ENCODE measurements at regions of chr9 and their contacts with region 1.

Region 1: DNA sequence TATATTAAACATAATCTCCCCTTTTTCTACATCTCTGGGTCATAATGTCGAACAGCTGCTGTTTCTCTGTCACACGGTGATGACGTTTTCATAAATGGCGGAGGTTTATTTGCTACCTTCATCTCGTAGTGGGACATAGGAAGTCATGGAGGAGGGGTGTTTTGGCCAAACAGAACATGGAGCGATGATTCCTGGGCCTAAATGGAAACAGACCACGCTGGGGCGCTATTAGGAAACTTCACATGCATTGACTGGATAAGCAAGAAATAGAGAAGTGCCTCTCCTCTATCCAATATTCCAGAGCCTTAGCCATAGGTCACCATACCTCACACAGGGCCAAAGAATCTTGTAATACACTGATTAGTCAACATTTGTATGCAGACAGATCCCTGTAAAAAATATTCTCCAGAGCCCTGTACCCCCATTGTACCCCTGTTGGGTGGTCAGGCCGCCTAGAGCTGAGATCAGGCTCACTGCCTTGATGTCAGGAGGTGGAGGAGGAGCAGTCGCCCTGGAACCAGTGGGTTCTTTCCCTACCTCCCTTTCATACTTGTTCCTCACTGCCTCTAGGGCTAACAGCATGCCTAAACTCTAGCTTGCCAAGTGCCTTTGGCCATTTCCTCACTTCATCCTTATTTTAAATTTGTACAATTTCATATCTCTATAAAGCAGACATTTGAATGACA is 77.8 kb upstream of the SPIN1 start:
- DNase-seq: no peak
- H3K4me3 Mint-ChIP-seq: no peak overlapping the region
- H3K27ac Mint-ChIP-seq: no peak overlapping the region
- H3K4me1 Mint-ChIP-seq: peaks cover 26% of the 10 kb centered on the region
- H3K27me3 Mint-ChIP-seq: no peaks in the 10 kb centered on the region

Region 2: DNA sequence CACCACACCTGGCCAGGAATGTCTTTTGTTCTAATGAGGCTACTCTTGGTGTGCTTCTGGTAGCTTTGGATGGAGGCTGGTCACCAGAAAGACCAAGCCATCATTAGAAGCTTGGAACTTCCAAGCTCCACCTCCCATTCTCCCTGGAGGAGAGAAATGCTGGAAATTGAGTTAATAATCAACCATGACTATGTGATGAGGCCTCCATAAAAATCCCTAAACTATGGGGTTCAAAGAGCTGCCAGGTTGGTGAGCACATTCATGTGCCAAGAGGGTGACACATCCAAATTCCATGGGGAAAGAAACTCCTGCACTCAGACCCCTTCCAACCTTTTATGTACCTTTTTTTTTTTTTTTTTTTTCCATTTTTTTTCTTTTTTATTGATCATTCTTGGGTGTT is 66.7 kb before region 1 on chr9:
- CTCF ChIA-PET with region 1: no interaction called
- intact Hi-C with region 1: no loop called
- DNase-seq: no peak
- H3K4me3 Mint-ChIP-seq: no peak overlapping the region
- H3K27ac Mint-ChIP-seq: no peak overlapping the region
- H3K4me1 Mint-ChIP-seq: no peaks in the 10 kb centered on the region
- H3K27me3 Mint-ChIP-seq: peaks cover 12% of the 10 kb centered on the region

Region 3: DNA sequence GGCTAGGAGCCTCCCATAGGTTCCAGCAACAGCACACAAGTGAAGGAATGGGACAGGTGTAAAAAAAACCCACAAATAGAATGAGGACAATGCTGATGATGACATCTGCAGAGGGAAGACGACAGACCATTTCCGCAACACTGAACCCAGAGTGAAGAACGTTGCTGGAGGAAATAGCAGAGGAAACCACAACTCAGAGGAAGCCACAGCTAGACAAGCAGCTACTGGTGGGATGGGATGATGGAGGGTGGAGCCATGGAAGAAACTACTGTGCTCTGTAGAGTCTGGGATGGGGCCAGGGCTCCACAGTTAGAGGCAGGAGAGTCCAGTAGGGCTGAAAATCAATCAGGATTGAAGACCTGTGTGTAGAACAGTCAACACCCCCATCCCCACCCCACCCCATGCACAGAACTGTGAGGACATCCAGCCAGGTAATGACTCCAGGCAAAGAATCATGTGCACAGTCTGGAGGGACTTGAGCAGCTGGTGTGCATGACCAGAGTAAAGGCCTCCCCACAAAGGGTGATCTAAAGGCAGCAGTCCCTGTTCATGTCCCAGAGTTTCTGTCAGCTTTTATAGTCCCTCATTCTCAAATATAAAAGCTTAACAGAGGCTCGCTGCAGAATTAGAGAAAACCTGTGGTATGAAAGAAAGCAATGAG is 12.6 kb after region 1 on chr9:
- CTCF ChIA-PET with region 1: interaction called, 5 read pairs
- intact Hi-C with region 1: loop called (anchors 1 kb)
- DNase-seq: peak; percentile 78
- H3K4me3 Mint-ChIP-seq: no peak overlapping the region
- H3K27ac Mint-ChIP-seq: peak overlapping the region; percentile 37
- H3K4me1 Mint-ChIP-seq: peaks cover 30% of the 10 kb centered on the region
- H3K27me3 Mint-ChIP-seq: no peaks in the 10 kb centered on the region

Region 4: GRCh38 chr9:88378317-88378716 is 67.9 kb after region 1 on chr9:
- CTCF ChIA-PET with region 1: no interaction called
- intact Hi-C with region 1: no loop called
- DNase-seq: no peak
- H3K4me3 Mint-ChIP-seq: no peak overlapping the region
- H3K27ac Mint-ChIP-seq: no peak overlapping the region
- H3K4me1 Mint-ChIP-seq: no peaks in the 10 kb centered on the region
- H3K27me3 Mint-ChIP-seq: no peaks in the 10 kb centered on the region

Region 5: GRCh38 chr9:88534456-88535261 is 224.2 kb after region 1 on chr9 and contains the start of gene NXNL2:
- CTCF ChIA-PET with region 1: no interaction called
- intact Hi-C with region 1: loop called (anchors 10 kb)
- DNase-seq: peak; percentile 71
- H3K4me3 Mint-ChIP-seq: peak within 1 kb of the TSS; percentile 55
- H3K27ac Mint-ChIP-seq: no peak within 1 kb of the TSS
- H3K4me1 Mint-ChIP-seq: peaks cover 24% of the 10 kb centered on the region
- H3K27me3 Mint-ChIP-seq: peaks cover 32% of the 10 kb centered on the region
- total RNA-seq, gene NXNL2: not detected